ENCODE measurements at regions of chr15 and their contacts with region 1.

Region 1: DNA sequence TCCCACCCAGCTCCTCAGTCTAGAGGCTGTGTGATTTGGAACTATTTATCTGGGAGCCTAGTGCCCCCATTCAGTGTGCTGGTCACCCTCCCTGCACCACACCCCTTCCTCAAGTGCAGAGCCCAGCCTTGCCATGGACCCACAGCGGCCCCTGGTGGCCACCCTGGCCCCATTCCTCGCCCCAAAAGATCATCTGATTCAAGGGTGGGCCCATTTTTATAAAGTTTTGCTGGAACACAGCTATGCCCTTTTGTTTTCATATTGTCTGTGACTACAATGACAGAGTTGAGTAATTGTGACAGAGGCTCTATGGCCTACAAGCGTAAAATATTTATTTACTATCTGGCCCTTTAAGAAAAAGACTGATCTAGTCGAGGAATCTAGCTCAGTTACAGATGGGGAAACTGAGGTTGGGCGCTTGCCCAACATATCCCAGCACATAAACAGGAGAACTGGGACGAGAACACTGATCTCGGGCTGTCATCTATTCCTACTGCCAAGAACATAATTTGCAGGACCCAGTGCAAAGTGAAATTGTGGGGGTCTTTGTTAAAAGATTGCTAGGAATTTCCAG is 1.8 kb downstream of the FES start:
- DNase-seq: peak; percentile 68 to 84 (median 77)
- H3K4me3 ChIP-seq: peak overlapping the region in 1 of 4 donors; percentile 63
- H3K27ac ChIP-seq: peak overlapping the region in 2 of 5 donors; percentile 91 to 95
- H3K4me1 ChIP-seq: peaks cover 0 to 33% of the 10 kb centered on the region in 2 donors
- H3K27me3 ChIP-seq: no peaks in the 10 kb centered on the region
- CTCF ChIP-seq: peak; percentile 87 to 99 (median 96)
- POLR2A ChIP-seq: no peak

Region 2: DNA sequence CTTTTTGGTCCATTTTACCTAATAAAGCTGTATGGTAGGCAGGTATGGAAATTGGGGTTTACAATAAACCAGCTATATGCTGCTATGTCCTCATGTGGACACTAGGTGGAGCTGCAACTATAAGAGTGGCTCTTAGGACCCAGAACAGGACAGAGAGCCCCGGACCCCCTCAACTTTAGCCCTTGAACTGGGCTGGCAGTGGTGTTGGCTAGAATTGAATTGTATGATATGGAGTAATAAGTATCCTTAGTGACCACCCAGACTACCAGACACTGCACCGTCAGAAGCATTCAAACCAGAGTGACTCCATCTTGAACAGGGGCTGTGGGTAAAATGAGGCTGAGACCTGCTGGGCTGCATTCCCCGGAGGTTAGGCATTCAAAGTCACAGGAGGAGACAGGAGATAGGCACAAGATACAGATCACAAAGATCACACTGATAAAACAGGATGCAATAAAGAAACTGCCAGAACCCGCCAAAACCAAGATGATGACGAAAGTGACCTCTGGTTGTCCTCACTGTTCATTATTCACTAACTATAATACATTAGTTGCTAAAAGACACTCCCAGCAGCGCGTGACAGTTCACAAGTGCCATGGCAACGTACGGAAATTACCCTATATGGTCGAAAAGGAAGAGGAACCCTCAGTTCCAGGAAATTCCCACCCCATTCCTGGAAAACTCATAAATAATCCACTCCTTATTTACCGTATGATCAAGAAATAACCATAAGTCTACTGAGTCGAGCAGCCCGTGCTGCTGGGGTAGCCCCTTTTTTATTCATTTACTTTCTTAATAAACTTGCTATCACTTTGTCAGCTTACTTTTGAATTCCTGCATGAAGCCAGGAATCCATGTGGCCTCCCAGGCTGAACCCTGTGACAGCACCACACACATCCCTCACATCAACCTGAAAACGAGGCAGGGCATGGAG is 237.7 kb before region 1 on chr15:
- intact Hi-C with region 1: loop called (anchors 5 kb)
- DNase-seq: peak; percentile 62 to 91 (median 72)
- H3K4me3 ChIP-seq: no peak overlapping the region
- H3K27ac ChIP-seq: peak overlapping the region in 2 of 5 donors; percentile 83 to 84
- H3K4me1 ChIP-seq: peaks cover 0 to 19% of the 10 kb centered on the region in 2 donors
- H3K27me3 ChIP-seq: no peaks in the 10 kb centered on the region
- CTCF ChIP-seq: peak; percentile 86 to 96 (median 92)
- POLR2A ChIP-seq: no peak

Region 3: DNA sequence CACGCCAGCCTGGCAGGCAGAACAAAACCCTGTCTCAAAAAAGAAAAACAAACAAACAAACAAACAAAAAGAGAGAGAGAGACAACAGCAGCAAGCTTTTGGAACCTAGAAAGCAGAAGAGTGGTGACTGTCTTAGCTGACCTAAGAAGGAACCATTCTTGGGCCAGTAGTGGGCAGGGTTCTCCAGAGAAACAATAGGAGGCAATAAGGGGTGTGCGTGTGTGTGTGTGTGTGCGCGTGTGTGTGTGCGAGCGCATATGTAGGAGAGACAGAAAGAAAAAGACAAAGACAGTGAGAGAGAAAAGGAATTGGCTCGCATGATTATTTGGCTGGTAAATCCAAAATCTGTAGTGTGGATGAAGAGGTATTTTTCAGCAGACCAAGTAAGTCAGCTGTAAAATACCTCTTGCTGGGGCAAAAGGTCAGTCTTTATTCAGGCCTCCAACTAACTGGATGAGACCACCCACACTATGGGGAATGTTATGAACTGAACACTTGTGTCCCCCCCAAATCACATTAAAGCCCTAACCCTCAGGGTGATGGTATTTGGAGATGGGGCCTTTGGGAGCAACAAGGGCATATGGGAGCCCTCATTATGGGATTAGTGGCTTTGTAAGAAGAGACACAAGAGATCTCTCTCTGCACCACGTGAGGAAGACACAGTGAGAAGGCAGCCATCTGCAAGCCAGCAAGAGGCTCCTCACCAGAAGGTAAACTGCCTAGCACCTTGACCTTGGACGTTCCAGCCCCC is 184.1 kb before region 1 on chr15:
- intact Hi-C with region 1: loop called in 1 of 2 experiments (anchors 5 kb)
- DNase-seq: peak in 3 of 7 donors; percentile 18 to 39 (median 22)
- H3K4me3 ChIP-seq: no peak overlapping the region
- H3K27ac ChIP-seq: no peak overlapping the region
- H3K4me1 ChIP-seq: no peaks in the 10 kb centered on the region
- H3K27me3 ChIP-seq: no peaks in the 10 kb centered on the region
- CTCF ChIP-seq: peak in 1 of 6 experiments; percentile 22
- POLR2A ChIP-seq: no peak

Region 4: DNA sequence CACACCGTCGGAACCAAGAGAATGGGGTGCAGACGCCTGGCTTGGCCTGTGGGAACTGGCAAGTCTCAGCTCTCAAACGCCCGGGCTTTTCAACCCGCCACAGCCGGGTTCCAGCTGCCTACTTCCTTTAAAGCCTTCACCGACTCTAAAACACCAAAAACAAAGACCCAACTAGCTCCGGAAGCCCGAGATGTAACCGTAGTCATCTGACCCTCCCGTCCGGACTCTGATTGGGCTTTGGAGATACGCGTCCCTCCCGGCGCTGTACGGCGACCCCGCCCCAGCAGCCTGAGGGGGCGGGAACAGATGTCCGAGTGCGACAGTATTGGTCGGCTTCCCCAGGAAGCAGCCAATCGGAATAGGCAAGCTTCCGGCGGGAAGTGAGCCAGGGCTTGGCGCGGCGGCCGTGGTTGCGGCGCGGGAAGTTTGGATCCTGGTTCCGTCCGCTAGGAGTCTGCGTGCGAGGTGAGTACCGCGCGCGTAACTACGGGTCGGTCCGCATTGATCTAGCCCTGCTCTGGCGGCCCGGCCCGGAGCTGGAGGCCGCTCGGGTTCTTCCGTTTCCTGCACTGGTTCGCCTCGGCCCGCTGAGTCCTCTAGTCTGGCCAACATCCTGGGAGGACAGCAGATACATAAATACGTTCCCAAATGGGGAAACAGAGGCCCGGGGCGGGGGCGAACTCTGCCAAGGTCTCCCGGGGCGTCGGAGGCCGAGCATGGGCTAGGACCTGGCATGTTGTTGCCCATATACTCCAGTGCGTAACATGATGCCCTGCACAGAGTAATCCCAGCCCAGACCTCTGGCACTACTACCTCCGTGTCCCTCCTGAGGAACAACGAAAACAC is 168.9 kb before region 1 on chr15 and contains the start of gene BLM:
- intact Hi-C with region 1: loop called in 1 of 2 experiments (anchors 10 kb)
- DNase-seq: peak; percentile 95 to 98 (median 97)
- H3K4me3 ChIP-seq: peak within 1 kb of the TSS in 3 of 4 donors; percentile 62 to 72 (median 69)
- H3K27ac ChIP-seq: peak within 1 kb of the TSS in 4 of 5 donors; percentile 81 to 93 (median 88)
- H3K4me1 ChIP-seq: peaks cover 0 to 5% of the 10 kb centered on the region in 2 donors
- H3K27me3 ChIP-seq: no peaks in the 10 kb centered on the region
- CTCF ChIP-seq: peak; percentile 25 to 70 (median 53)
- POLR2A ChIP-seq: peak; percentile 44 to 71
- total RNA-seq, gene BLM: 0.24 to 6.8 (median 1.3) TPM

Region 5: GRCh38 chr15:91055548-91056331 is 169.6 kb after region 1 on chr15:
- intact Hi-C with region 1: no loop called
- DNase-seq: peak; percentile 69 to 87 (median 78)
- H3K4me3 ChIP-seq: no peak overlapping the region
- H3K27ac ChIP-seq: no peak overlapping the region
- H3K4me1 ChIP-seq: no peaks in the 10 kb centered on the region
- H3K27me3 ChIP-seq: peaks cover 20% of the 10 kb centered on the region
- CTCF ChIP-seq: peak; percentile 62 to 87 (median 80)
- POLR2A ChIP-seq: no peak

Region 6: DNA sequence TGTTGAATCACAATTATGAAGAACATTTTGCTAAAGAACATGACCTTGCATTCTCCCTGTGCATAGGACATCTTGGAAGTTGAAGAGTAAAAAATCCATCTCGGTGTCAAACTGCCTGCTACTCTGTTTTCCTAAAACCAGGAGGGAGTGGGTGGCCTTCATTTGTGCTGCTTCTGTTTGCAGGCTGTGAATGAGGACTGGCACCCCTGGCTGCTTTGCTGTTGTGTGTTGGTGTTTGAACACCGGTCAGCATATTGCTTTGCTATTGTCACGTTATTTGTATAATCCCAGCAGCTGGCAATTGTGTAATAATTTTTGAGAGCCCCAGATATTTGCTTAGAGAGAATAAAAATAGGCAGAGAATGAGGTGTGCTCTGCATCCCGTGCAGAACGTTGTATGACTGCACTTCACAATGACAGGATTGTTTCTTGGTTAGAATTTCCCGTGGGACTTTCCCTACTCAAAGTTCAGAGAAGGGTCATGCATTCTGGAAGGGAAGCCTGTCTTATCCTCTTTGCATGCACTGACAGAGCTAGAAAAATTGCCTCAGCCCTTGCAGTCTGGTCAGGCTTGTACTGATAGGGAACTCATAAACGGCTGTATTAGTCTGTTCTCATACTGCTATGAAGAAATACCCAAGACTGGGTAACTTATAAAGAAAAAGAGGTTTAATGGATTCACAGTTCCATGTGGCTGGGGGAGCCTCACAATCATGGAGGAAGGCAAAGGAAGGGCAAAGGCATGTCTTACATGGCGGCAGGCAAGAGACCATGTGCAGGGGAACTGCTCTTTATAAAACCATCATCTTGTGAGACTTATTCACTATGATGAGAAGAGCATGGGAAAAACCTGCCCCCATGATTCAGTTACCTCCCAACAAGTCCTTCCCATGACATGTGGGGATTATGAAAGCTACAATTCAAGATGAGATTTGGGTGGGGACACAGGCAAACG is 230.3 kb after region 1 on chr15:
- intact Hi-C with region 1: no loop called
- DNase-seq: no peak
- H3K4me3 ChIP-seq: no peak overlapping the region
- H3K27ac ChIP-seq: no peak overlapping the region
- H3K4me1 ChIP-seq: no peaks in the 10 kb centered on the region
- H3K27me3 ChIP-seq: no peaks in the 10 kb centered on the region
- CTCF ChIP-seq: no peak
- POLR2A ChIP-seq: no peak